Mucosa of descending colon (tissue), 3 donors: ENCODE measurements at regions of chr18 and their contacts with region 1.

Region 1: GRCh38 chr18:53796040-53796729 is 428.3 kb downstream of the MBD2 start:
- DNase-seq: no peak
- ATAC-seq: peak; percentile 60
- H3K4me3 ChIP-seq: no peak overlapping the region
- H3K4me1 ChIP-seq: peaks cover 8% of the 10 kb centered on the region
- CTCF ChIP-seq: no peak

Region 2: DNA sequence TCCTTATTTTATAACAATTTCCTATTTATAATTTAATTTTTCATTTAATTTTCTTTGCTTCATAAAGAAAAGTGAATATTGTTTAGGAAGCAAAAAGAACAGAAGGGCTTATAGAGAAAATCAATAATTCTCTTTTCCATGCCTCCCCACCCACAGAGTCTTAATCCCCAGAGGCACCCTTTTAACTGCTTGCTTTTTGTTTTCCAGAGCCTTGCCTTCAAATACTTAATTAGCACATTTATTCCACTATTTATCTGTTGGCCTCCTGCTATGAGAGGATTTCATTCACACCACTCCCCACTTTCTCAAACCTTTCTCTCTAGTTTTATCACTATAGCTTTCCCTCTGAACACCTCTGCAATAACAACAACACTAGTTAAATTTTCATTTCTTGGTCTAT is 54.7 kb after region 1 on chr18:
- intact Hi-C with region 1: loop called in 1 of 2 experiments (anchors 10 kb)
- DNase-seq: no peak
- ATAC-seq: no peak
- H3K4me3 ChIP-seq: no peak overlapping the region
- H3K4me1 ChIP-seq: no peaks in the 10 kb centered on the region
- CTCF ChIP-seq: no peak